K562 (cell line): ENCODE measurements at regions of chr2 and their contacts with region 1.

Region 1: GRCh38 chr2:41782306-41783158 is 265.3 kb upstream of the PKDCC start:
- DNase-seq: peak; percentile 28 to 43 (median 40)
- ATAC-seq: peak; percentile 69
- H3K4me3 ChIP-seq: no peak overlapping the region
- H3K27ac ChIP-seq: no peak overlapping the region
- H3K4me1 ChIP-seq: no peaks in the 10 kb centered on the region
- H3K27me3 ChIP-seq: no peaks in the 10 kb centered on the region
- CTCF ChIP-seq: peak; percentile 53 to 82 (median 74); a peak in 5 of 6 replicates
- EP300 ChIP-seq: no peak
- POLR2A ChIP-seq: no peak
- RAD21 ChIP-seq: peak; percentile 91 to 93

Region 2: DNA sequence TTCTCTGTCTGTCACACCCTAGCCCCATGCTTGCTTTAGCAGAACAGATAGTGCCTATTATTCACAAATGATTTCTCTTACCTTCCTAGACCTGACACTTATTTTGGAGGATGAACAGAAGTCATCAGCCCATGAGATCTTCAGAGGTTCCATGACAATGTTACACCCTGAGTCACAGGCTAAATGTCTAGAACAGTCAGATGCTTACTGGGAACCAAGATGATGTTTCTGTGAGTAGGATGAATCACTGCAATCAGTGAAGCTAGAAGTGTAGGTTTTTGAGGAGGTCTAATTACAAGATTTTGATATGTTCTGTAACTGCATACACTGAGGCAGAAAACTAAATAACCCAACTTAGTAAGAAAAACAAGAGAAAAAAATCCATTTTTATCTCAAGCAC is 1880.4 kb before region 1 on chr2:
- CTCF ChIA-PET with region 1: no interaction called
- POLR2A ChIA-PET with region 1: no interaction called
- in situ Hi-C with region 1: loop called (anchors 10 kb)
- intact Hi-C with region 1: no loop called
- DNase-seq: no peak
- ATAC-seq: no peak
- H3K4me3 ChIP-seq: no peak overlapping the region
- H3K27ac ChIP-seq: no peak overlapping the region
- H3K4me1 ChIP-seq: no peaks in the 10 kb centered on the region
- H3K27me3 ChIP-seq: no peaks in the 10 kb centered on the region
- CTCF ChIP-seq: no peak
- EP300 ChIP-seq: no peak
- POLR2A ChIP-seq: no peak
- RAD21 ChIP-seq: no peak

Region 3: GRCh38 chr2:39913648-39914461 is 1868.7 kb before region 1 on chr2:
- CTCF ChIA-PET with region 1: no interaction called
- POLR2A ChIA-PET with region 1: no interaction called
- in situ Hi-C with region 1: loop called (anchors 10 kb)
- intact Hi-C with region 1: loop called (anchors 2 kb)
- DNase-seq: peak; percentile 37 to 57 (median 54)
- ATAC-seq: peak; percentile 82
- H3K4me3 ChIP-seq: no peak overlapping the region
- H3K27ac ChIP-seq: no peak overlapping the region
- H3K4me1 ChIP-seq: no peaks in the 10 kb centered on the region
- H3K27me3 ChIP-seq: no peaks in the 10 kb centered on the region
- CTCF ChIP-seq: peak; percentile 42 to 78 (median 68); a peak in 5 of 6 replicates
- EP300 ChIP-seq: no peak
- POLR2A ChIP-seq: no peak
- RAD21 ChIP-seq: peak; percentile 91 to 95

Region 4: DNA sequence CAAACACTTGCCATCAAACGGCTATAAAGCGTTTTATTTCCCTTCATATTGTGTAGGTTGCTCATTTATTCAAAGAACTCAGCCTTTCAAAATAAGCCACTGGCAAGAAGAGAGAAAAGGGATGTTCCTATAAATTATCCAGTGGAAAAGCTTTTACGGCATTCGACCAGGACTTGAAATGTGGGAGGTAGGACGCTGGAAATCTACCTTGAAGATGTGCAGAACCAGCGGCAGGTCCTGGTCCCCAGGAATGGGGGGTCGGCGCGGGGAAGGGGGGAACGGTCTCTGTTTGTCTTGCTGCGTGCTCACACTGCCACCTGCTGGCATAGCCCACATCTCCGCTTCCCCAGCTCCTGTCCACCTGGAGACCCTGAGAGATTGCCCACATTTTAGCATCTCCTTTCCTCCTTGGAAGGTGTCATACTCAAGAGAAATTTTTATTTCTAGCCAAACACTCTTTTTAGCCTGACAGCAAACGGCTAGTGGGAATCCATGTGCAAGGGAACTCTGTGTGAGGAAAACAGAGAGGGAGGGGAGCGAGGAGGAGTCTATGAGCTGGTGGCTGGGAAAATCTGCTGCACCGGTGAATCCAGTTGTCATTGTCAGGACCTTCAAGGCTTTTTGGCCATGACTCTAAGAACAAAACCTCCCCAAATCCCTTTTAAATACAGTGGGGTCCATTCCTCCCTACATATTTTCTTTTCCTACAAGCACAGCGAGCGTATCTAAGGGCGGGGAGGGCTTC is 83.7 kb before region 1 on chr2:
- CTCF ChIA-PET with region 1: interaction called, 5 read pairs
- POLR2A ChIA-PET with region 1: no interaction called
- in situ Hi-C with region 1: no loop called
- intact Hi-C with region 1: loop called (anchors 5 kb)
- DNase-seq: peak; percentile 26 to 45 (median 34)
- ATAC-seq: peak; percentile 75
- H3K4me3 ChIP-seq: no peak overlapping the region
- H3K27ac ChIP-seq: no peak overlapping the region
- H3K4me1 ChIP-seq: no peaks in the 10 kb centered on the region; a peak in 1 of 5 replicates
- H3K27me3 ChIP-seq: no peaks in the 10 kb centered on the region
- CTCF ChIP-seq: peak; percentile 47 to 68 (median 56); a peak in 5 of 6 replicates
- EP300 ChIP-seq: no peak
- POLR2A ChIP-seq: no peak
- RAD21 ChIP-seq: peak; percentile 52 to 73

Region 5: DNA sequence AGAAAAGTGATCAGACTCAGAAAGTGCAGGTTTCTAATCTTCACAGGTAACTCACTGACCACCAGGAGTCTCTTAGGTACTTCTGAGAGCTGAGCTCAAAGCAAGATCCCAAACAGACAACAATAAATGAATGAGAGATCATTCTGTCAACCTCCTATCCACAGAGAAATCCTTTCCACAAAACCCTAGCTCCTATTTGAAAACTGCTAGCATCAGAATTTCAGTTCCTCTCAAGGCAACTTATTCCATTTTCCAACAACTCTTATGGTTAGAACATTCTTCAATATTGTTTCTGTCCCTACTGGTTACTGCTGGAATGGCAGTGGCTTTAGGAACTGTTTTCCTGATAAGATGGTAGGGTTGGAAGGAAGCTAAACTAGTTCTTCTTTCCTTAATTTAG is 1030.5 kb after region 1 on chr2:
- CTCF ChIA-PET with region 1: no interaction called
- POLR2A ChIA-PET with region 1: no interaction called
- in situ Hi-C with region 1: no loop called
- intact Hi-C with region 1: no loop called
- DNase-seq: peak in 1 of 4 experiments; percentile 45
- ATAC-seq: no peak
- H3K4me3 ChIP-seq: no peak overlapping the region
- H3K27ac ChIP-seq: no peak overlapping the region
- H3K4me1 ChIP-seq: peaks cover 9 to 19% of the 10 kb centered on the region in 2 experiments; a peak in 4 of 5 replicates
- H3K27me3 ChIP-seq: no peaks in the 10 kb centered on the region
- CTCF ChIP-seq: peak in 2 of 3 experiments; percentile 48 to 49; a peak in 4 of 6 replicates
- EP300 ChIP-seq: no peak
- POLR2A ChIP-seq: no peak
- RAD21 ChIP-seq: no peak